Activated naive CD4-positive, alpha-beta T cell treated with anti-CD3 and anti-CD28 coated beads for 36 hours (primary cell): ENCODE measurements at regions of chr12 and their contacts with region 1.

Region 1: DNA sequence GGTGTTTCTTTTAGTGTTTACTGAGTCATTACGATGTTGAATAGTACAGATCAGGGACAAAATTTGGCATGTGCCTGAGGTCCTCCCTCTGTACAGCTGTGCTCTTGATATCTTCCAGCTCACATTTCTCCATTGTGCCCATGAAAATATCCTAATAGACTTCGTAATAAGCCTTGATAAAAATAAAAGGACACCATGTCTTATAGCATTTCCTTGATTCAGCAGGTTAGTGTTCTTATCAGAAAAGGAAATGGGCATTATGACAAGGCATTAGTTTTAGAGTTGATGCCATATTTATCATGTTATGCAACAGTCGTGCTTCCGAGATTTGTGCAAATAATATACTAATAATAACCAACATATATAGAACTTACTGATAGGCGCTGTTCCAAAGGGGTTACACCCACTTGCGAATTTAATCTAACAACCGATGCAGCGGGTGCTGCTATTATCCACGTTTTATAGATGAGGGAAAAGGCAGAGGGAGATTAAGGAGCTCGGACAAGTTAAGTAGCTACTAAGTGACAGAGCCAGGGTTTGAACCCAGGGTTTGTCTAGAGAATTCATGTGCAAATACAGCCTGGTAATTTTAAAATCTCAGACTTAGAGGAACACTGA is 15.1 kb upstream of the WNK1 start:
- DNase-seq: no peak
- H3K4me3 Mint-ChIP-seq: no peak overlapping the region
- H3K27ac Mint-ChIP-seq: no peak overlapping the region
- H3K4me1 Mint-ChIP-seq: peaks cover 4% of the 10 kb centered on the region
- H3K27me3 Mint-ChIP-seq: no peaks in the 10 kb centered on the region

Region 2: GRCh38 chr12:724194-724855 is 12.9 kb before region 1 on chr12:
- CTCF ChIA-PET with region 1: interaction called, 14 read pairs
- intact Hi-C with region 1: no loop called
- DNase-seq: peak; percentile 54
- H3K4me3 Mint-ChIP-seq: peak overlapping the region; percentile 14
- H3K27ac Mint-ChIP-seq: peak overlapping the region; percentile 80
- H3K4me1 Mint-ChIP-seq: peaks cover 83% of the 10 kb centered on the region
- H3K27me3 Mint-ChIP-seq: no peaks in the 10 kb centered on the region

Region 3: DNA sequence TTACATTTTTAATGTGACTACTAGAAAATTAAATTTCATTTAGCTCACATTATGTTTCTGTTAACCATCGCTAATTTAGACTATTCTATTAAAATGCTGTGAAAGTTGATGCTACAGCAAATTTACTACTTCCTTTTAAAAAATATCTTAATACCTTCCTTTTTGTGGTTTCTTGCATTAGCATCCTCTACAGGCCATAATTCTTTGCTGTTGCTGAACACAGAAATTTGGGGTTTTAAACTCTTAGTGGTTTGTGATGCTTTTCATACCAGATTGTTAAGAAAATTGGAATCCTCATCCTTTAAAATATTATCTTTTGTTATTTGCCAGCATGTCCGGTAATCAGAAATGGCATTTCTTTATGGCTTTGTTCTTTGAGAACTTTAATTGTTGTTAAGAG is 33.2 kb after region 1 on chr12:
- CTCF ChIA-PET with region 1: no interaction called
- intact Hi-C with region 1: no loop called
- DNase-seq: no peak
- H3K4me3 Mint-ChIP-seq: no peak overlapping the region
- H3K27ac Mint-ChIP-seq: no peak overlapping the region
- H3K4me1 Mint-ChIP-seq: peaks cover 63% of the 10 kb centered on the region
- H3K27me3 Mint-ChIP-seq: no peaks in the 10 kb centered on the region